ENCODE measurements at regions of chr4 and their contacts with region 1.

Region 1: DNA sequence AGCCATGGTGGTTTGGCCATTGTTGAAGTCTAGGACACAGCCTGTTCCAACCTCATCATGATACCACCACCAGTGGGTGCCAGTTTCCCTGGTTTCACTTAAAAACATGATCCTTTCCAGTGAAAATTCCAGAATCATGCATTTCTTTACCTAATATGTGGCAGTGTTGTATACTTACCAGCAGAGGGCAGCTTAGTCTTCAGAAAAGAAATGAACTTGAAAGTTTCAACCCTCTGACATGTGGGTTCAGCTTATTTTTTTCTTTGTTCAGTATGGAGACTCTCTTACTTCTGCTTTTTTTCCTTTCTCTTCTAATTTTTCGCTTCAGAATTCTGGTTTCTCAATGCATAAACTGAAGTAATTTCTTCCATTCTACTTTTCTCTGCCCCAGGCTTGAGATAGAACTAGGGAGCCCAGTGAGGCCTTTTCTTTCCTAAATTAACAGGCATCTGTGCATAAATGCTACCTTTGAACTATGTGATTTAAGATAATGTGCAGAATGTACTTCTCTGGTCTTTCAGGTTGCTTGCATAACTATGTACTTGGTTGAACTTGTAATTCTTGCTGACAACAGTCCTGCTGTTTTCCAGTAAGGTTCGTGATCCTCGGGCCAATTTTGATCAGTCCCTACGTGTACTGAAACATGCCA is 10.7 kb downstream of the LIAS start:
- DNase-seq: peak; percentile 89
- ATAC-seq: peak; percentile 93
- H3K4me3 ChIP-seq: no peak overlapping the region
- H3K27ac ChIP-seq: peak overlapping the region; percentile 77
- H3K4me1 ChIP-seq: peaks cover 58% of the 10 kb centered on the region
- H3K27me3 ChIP-seq: no peaks in the 10 kb centered on the region
- CTCF ChIP-seq: peak; percentile 84
- EP300 ChIP-seq: peak in 1 of 2 experiments; percentile 47; a peak in 1 of 4 replicates
- POLR2A ChIP-seq: no peak
- RAD21 ChIP-seq: peak; percentile 91

Region 2: DNA sequence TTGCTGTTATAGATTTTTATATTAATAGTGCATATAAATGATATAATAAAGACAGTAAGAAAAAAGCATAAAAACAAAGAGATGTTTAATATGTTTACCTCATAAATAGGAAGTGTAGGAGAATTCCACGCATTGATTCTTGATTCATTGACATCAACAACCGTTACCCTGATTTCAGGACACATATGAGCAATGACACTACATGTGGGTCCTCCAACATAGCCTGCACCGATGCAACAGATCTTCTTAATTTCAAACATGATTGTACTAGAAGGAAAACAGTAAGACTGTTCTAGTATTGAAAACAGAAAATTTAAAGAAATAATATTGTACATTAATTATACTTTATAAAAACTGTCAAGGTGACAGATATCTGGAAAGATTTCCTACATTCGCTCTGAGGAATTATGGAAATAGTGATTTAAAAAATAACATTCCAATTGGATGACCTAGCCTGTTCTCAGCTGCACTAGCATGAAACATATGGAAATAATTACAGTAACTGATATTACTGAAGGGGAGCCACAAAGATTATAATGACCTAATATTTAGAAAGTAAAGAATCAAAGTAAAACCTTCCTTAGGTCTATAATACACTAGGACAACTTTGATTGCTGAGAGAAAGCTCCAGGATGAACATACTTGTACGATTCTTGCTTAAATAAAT is 51.8 kb after region 1 on chr4:
- CTCF ChIA-PET with region 1: no interaction called
- POLR2A ChIA-PET with region 1: interaction called, 5 read pairs
- in situ Hi-C with region 1: no loop called
- intact Hi-C with region 1: loop called (anchors 5 kb)
- DNase-seq: no peak
- ATAC-seq: no peak
- H3K4me3 ChIP-seq: peak overlapping the region; percentile 68 to 96 (median 96); a peak in 4 of 6 replicates
- H3K27ac ChIP-seq: peak overlapping the region; percentile 94
- H3K4me1 ChIP-seq: peaks cover 65% of the 10 kb centered on the region
- H3K27me3 ChIP-seq: no peaks in the 10 kb centered on the region
- CTCF ChIP-seq: no peak
- EP300 ChIP-seq: no peak
- POLR2A ChIP-seq: no peak
- RAD21 ChIP-seq: no peak

Region 3: DNA sequence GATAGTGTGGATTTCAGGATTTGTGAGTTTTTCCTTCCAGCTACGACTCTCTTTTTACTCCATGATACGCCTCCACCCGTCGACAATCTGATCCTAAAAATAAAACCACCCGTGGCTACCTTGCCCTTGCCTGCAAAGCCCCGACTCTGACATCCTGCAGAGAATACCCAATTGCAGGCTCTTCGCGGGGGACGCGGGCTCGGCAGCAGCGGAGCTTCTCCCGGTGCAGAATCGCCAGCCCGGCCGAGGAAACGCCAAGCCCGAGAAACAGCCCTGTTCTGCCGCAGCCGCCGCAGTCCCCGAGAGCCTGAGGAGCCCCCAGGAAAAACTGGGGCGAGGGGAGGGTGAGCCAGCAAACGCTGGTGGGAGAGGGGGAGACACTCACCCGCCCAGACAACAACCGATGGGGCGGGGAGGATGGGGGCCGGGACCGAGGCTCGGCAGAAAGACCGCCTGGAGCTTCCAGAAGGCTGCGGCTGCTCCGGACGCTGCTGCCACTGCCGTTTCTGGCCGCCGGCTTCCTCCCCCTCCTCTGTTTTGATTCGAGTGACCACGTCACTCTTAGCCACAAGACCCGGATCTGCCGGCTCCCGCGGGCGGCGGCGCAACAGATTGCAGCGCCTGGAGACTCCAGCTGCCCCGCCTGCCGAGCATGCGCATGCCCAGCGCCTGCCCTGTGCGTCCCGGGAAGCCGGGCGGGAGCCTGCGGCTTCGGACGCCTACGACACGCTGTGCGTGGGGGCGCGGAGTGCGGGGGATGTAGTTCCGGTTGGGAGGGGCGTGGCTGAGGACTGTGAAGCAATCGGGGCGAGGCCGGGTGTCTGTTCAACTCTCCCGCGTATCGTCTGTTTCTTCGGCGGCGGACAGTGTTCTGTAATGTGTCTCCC is 169.0 kb after region 1 on chr4 and contains the start of gene SMIM14:
- CTCF ChIA-PET with region 1: no interaction called
- POLR2A ChIA-PET with region 1: interaction called, 12 read pairs
- in situ Hi-C with region 1: no loop called
- intact Hi-C with region 1: loop called (anchors 10 kb)
- DNase-seq: peak; percentile 96
- ATAC-seq: peak; percentile 92
- H3K4me3 ChIP-seq: peak within 1 kb of the TSS; percentile 83 to 95 (median 87)
- H3K27ac ChIP-seq: peak within 1 kb of the TSS; percentile 92
- H3K4me1 ChIP-seq: peaks cover 54% of the 10 kb centered on the region
- H3K27me3 ChIP-seq: no peaks in the 10 kb centered on the region; a peak in 1 of 5 replicates
- CTCF ChIP-seq: peak; percentile 36
- EP300 ChIP-seq: peak; percentile 31 to 58; a peak in 2 of 4 replicates
- POLR2A ChIP-seq: peak; percentile 87 to 92
- RAD21 ChIP-seq: 0 out of 2 replicates have a peak, but pooled peaks have one; percentile 28
- total RNA-seq, gene SMIM14: 16.3 and 26.2 TPM in 2 replicates

Region 4: DNA sequence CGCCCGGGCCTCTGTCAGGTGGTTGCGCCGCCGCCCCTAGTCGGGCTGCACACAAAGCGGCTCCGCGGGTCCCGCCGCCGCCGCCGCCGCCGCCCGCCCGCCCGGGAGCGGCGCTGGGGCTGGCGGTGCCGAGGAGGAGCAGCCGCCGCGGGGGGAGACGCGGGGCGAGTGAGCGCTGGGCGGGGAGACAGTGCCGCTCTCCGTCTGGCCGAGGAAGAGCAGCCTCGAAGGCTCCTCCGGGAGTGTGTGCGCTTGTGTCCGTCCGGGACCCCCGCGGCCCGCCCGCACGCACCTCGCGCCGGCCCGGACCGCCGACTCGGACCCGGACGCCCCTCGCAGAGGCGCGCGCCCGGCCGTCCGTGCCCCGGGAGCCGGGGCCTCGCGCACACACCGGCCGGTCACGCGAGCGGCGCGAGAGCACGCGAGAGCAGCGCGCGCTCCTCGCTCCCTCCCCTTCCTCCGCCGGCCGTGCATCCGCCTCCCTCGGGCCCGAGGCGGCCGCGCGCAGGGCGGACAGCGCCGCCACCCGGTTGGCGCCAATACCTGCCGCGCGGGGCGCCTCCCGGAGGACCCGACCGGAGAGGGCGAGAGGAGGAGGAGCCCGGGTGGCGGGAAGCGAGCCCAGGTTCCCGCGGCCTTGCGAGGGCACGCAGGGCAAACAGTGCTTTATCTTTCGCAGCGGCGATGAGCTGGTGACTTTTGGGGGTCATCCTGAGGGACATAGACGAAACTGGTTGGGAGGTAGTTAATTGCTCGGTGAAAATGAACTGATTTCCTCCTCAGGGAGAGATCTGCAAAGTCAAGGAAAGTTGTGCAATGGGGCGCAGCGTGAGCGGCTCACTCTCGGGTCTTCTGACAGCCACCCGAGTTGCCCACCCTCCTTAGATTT is 508.2 kb after region 1 on chr4 and contains the start of gene PDS5A:
- CTCF ChIA-PET with region 1: interaction called, 18 read pairs
- POLR2A ChIA-PET with region 1: no interaction called
- in situ Hi-C with region 1: loop called (anchors 5 kb)
- intact Hi-C with region 1: loop called (anchors 1 kb)
- DNase-seq: peak; percentile 81
- ATAC-seq: peak; percentile 86
- H3K4me3 ChIP-seq: peak within 1 kb of the TSS; percentile 98 to 99 (median 99)
- H3K27ac ChIP-seq: peak within 1 kb of the TSS; percentile 90
- H3K4me1 ChIP-seq: peaks cover 43% of the 10 kb centered on the region
- H3K27me3 ChIP-seq: no peaks in the 10 kb centered on the region; a peak in 1 of 5 replicates
- CTCF ChIP-seq: peak; percentile 83
- EP300 ChIP-seq: 0 out of 4 replicates have a peak, but pooled peaks of 1 of the 2 experiments have one; percentile 36
- POLR2A ChIP-seq: peak; percentile 39 to 70
- RAD21 ChIP-seq: peak; percentile 95
- total RNA-seq, gene PDS5A: 57.0 and 77.4 TPM in 2 replicates

Measured in HepG2 (cell line).